ENCODE measurements at regions of chr15 and their contacts with region 1.

Region 1: GRCh38 chr15:100918034-100918689 is 995 bp upstream of the LRRK1 start:
- DNase-seq: peak; percentile 64
- H3K4me3 Mint-ChIP-seq: peak overlapping the region; percentile 83
- H3K27ac Mint-ChIP-seq: no peak overlapping the region
- H3K4me1 Mint-ChIP-seq: peaks cover 17% of the 10 kb centered on the region
- H3K27me3 Mint-ChIP-seq: peaks cover 55% of the 10 kb centered on the region

Region 2: DNA sequence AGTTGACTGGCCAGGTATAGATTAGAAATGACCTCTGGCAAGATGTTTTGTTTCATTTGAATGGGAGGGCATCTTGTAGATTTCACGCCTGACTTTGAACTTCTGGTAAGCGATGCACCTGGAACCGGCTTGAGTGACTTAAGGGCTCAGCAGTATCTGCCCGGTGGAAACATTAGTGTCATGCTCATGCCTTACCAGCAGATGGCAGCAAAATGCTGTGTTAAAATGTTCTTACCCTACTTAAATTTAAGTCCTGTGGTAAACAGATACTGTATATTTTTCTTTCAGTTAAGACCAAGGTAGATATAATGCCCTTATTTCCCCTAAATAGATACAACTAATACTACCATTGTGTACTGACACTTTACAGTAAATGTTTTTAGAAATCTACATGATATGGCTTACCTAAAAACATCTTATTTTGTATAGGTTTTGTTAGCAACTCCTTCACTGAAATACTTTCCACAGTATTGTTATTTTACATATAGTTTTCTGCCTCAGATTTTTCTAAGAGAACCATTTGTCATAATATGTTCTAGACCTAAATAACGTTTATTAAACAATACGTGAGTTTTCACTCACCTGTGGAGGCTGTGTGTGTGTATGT is 290.3 kb before region 1 on chr15:
- intact Hi-C with region 1: loop called (anchors 5 kb)
- DNase-seq: peak; percentile 48
- H3K4me3 Mint-ChIP-seq: no peak overlapping the region
- H3K27ac Mint-ChIP-seq: no peak overlapping the region
- H3K4me1 Mint-ChIP-seq: peaks cover 24% of the 10 kb centered on the region
- H3K27me3 Mint-ChIP-seq: no peaks in the 10 kb centered on the region

Region 3: GRCh38 chr15:100778831-100779288 is 139.3 kb before region 1 on chr15:
- intact Hi-C with region 1: no loop called
- DNase-seq: no peak
- H3K4me3 Mint-ChIP-seq: no peak overlapping the region
- H3K27ac Mint-ChIP-seq: no peak overlapping the region
- H3K4me1 Mint-ChIP-seq: no peaks in the 10 kb centered on the region
- H3K27me3 Mint-ChIP-seq: no peaks in the 10 kb centered on the region

Region 4: DNA sequence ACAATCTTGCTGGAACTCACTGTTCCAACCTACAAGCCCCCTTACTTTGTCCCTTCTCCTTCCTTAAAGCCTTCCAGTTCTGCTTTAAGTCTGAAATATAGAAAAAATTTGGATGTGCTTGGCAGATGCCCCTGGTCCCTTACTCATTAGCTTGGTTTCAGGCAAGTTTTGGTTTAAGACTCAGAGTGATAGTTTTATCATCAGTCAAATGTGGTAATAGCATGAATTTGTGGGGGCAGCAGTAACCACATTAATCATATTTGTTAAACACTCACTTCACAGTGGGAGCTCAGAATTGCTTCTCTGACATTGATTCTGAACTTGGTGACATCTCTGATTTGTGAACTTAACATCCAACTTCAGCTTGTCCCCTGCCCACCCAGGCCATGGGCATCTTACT is 96.8 kb before region 1 on chr15:
- intact Hi-C with region 1: no loop called
- DNase-seq: no peak
- H3K4me3 Mint-ChIP-seq: no peak overlapping the region
- H3K27ac Mint-ChIP-seq: no peak overlapping the region
- H3K4me1 Mint-ChIP-seq: no peaks in the 10 kb centered on the region
- H3K27me3 Mint-ChIP-seq: peaks cover 15% of the 10 kb centered on the region

Region 5: GRCh38 chr15:100891307-100892008 is 26.7 kb before region 1 on chr15:
- intact Hi-C with region 1: no loop called
- DNase-seq: no peak
- H3K4me3 Mint-ChIP-seq: no peak overlapping the region
- H3K27ac Mint-ChIP-seq: no peak overlapping the region
- H3K4me1 Mint-ChIP-seq: no peaks in the 10 kb centered on the region
- H3K27me3 Mint-ChIP-seq: peaks cover 27% of the 10 kb centered on the region

Region 6: DNA sequence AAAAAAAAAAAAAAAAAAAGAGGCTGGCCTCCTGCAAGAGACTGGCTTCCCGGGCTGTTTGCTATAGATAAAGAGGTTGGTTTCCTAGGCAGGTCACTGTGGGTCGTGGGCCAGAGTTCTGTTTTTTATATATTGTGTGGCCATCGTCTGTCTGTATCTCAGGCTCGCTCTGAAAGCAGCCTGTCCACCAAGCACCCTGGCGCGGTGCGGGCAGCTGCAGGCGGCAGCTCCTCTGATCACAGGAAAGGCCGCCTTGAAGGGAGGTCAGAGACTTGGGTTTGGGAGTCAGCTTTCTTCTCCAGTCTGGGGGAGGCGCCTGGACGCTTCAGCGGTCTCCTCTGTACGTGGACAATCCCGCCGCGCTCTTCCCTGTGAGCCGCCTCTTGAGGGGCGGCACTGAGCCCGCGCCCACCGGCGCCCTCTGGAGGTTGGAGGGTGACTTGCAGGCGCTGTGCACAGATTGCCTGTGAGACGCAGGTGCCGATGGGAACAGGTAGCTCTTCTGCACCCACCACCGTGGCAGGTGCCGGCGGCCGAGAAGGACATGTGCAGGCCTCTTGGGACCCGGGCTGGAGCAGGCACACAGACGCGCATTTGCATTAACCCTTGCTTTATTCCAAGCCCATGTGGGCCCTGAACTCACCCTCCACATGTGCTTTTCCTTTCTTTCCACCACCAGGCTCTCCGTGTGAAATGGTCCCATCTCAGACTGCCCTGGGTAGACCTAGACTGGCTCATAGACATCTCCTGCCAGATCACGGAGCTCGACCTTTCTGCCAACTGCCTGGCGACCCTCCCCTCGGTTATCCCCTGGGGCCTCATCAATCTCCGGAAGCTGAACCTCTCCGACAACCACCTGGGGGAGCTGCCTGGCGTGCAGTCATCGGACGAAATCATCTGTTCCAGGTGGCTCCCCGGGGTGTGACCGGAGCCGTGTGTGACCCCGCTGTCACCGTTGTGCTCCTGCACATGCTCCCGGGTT is 90.3 kb after region 1 on chr15:
- intact Hi-C with region 1: loop called (anchors 1 kb)
- DNase-seq: peak; percentile 80
- H3K4me3 Mint-ChIP-seq: peak overlapping the region; percentile 89
- H3K27ac Mint-ChIP-seq: peak overlapping the region; percentile 18
- H3K4me1 Mint-ChIP-seq: peaks cover 19% of the 10 kb centered on the region
- H3K27me3 Mint-ChIP-seq: peaks cover 21% of the 10 kb centered on the region

Region 7: GRCh38 chr15:101062471-101063171 is 144.5 kb after region 1 on chr15:
- intact Hi-C with region 1: no loop called
- DNase-seq: no peak
- H3K4me3 Mint-ChIP-seq: no peak overlapping the region
- H3K27ac Mint-ChIP-seq: no peak overlapping the region
- H3K4me1 Mint-ChIP-seq: no peaks in the 10 kb centered on the region
- H3K27me3 Mint-ChIP-seq: peaks cover 3% of the 10 kb centered on the region

Region 8: DNA sequence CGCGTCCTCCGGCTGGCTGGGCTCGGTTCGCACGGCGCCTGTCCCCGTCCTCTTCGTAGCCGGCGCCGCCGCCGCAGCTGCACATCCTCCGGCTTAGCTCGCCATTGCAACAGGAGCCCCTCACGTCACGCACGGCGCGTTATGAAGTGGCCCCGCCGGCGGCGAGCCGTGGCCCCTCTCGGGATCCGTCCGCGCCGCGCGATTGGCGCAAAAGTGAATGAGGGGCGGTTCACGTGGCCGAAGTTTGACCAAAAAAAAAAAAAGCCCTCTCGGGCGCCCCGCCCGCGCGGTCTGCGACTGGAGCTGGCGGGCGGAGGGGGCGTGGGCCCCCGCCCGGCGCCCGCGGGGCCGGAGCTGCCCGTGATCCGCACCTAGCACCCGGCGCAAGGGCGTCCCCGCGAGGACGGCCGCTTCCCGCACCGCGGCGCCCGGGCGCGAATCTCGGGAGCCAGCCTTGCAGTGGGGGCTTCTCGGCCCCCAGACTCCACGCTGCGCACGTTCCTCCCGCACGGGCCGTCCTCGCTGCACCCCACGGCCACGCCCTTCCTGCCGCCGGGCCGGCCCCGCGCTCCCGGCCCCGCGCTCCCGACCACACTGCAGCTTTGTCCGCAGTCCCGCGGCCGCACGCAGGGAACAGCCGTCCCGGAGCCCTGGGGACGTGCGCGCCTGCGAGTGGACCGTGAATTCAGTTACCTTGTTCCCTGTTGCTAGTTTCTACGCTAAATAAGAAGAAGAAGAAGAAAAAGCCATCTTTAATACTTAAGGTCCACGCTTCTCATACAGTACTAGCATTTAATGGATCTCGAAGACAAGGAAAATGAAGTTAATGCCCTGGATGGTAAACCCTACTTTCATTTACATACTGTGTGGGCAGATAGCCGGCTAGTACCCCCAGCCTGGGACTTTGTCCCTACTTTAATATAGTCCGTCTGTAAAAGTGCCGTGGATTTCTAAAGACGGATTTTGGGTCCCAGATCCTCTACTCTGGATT is 334.0 kb after region 1 on chr15 and contains the start of gene CHSY1:
- intact Hi-C with region 1: loop called (anchors 2 kb)
- DNase-seq: peak; percentile 88
- H3K4me3 Mint-ChIP-seq: peak within 1 kb of the TSS; percentile 91
- H3K27ac Mint-ChIP-seq: peak within 1 kb of the TSS; percentile 90
- H3K4me1 Mint-ChIP-seq: peaks cover 69% of the 10 kb centered on the region
- H3K27me3 Mint-ChIP-seq: no peaks in the 10 kb centered on the region
- total RNA-seq, gene CHSY1: 76.3 and 78.0 TPM in 2 replicates

Measured in activated T-helper 1 cell treated with anti-CD3 and anti-CD28 coated beads, Interleukin-12 subunit alpha, Interleukin-12 subunit beta, Interleukin-2, Interleukin-4 antibody, amounts not matched to agents 30 ng/mL and 10 ng/mL and 1 ng/mL, durations not matched to agents 14 hours and 24 hours and 36 hours (primary cell).